ENCODE measurements at regions of chr6 and their contacts with region 1.

Region 1: DNA sequence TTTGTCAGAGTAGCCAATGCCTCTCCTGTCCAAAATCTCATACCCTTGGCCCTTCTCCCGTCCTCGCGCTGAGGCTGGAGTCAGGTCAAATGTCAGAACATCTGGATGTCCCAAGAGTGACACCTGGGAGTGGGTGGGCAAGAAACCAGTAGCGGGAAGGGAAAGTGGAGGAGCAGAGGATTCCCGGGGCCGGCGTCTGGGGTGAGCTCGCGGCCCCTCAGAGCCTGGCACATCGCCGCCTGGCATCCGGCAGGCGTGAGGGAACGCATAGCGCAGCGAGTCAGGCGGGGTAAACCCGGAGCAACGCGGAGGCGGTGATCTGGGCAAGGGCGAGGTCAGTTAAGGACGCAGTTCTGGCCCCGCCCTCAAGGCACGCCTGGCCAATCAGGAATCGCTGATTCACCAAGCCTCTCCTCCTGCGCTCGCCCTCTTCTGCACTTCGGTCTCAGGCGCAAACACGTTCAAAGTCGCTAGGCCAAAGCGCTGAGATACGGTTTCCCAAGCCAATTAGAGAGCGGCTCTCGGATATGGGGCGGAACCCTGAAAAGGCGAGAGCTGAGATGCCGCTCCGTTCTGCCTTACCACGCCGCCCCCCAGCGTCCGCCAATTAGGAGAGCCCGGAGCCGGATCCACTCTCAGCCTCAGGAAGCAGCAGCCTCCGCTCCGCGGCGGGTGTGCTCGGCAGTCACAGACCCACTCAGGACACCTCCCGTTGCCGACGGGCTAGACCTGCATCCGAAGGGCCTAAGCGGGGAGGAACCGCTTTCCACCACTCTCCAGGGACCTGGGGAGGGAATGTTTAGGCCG is 22.5 kb downstream of the VPS52 start:
- DNase-seq: peak; percentile 96 to 98
- H3K4me3 ChIP-seq: peak overlapping the region; percentile 49
- H3K4me3 Mint-ChIP-seq: peak overlapping the region; percentile 85
- H3K27ac Mint-ChIP-seq: peak overlapping the region; percentile 75
- H3K4me1 ChIP-seq: peaks cover 5% of the 10 kb centered on the region; the same call in 1 of the 2 replicates
- H3K4me1 Mint-ChIP-seq: peaks cover 10% of the 10 kb centered on the region
- H3K27me3 ChIP-seq: no peaks in the 10 kb centered on the region
- H3K27me3 Mint-ChIP-seq: no peaks in the 10 kb centered on the region
- CTCF ChIP-seq: peak in 1 of 2 experiments; percentile 3

Region 2: DNA sequence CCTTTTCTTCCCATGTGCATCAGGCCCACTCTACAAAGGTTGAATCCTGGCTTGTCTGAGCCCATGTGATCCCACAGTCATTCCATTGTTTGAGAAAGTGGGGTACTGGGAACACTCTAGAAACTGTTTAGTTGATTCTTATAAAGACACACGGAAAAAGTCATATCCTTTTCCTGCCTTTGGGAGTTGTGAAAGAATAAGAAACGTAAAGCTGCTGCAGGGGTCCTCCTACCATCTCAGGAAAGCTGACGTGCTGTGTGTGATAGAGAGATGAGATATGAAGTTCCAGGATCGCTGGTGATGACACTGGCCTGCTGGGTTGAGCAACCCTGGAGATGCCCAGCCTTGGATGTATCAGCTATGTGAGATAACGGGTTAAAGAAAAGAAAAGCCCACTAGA is 697.7 kb before region 1 on chr6:
- CTCF ChIA-PET with region 1: no interaction called
- POLR2A ChIA-PET with region 1: no interaction called
- intact Hi-C with region 1: no loop called
- DNase-seq: no peak
- H3K4me3 ChIP-seq: no peak overlapping the region
- H3K4me3 Mint-ChIP-seq: no peak overlapping the region
- H3K27ac Mint-ChIP-seq: no peak overlapping the region
- H3K4me1 ChIP-seq: no peaks in the 10 kb centered on the region
- H3K4me1 Mint-ChIP-seq: no peaks in the 10 kb centered on the region
- H3K27me3 ChIP-seq: no peaks in the 10 kb centered on the region
- H3K27me3 Mint-ChIP-seq: peaks cover 16% of the 10 kb centered on the region
- CTCF ChIP-seq: no peak

Region 3: GRCh38 chr6:32894080-32895005 is 354.8 kb before region 1 on chr6:
- CTCF ChIA-PET with region 1: interaction called, 3 read pairs
- POLR2A ChIA-PET with region 1: no interaction called
- intact Hi-C with region 1: loop called (anchors 1 kb)
- DNase-seq: peak; percentile 93 to 96
- H3K4me3 ChIP-seq: peak overlapping the region; percentile 68
- H3K4me3 Mint-ChIP-seq: peak overlapping the region; percentile 99
- H3K27ac Mint-ChIP-seq: peak overlapping the region; percentile 96
- H3K4me1 ChIP-seq: no peaks in the 10 kb centered on the region
- H3K4me1 Mint-ChIP-seq: peaks cover 7% of the 10 kb centered on the region
- H3K27me3 ChIP-seq: no peaks in the 10 kb centered on the region
- H3K27me3 Mint-ChIP-seq: peaks cover 4% of the 10 kb centered on the region
- CTCF ChIP-seq: no peak

Region 4: GRCh38 chr6:33029328-33030184 is 219.6 kb before region 1 on chr6:
- CTCF ChIA-PET with region 1: no interaction called
- POLR2A ChIA-PET with region 1: no interaction called
- intact Hi-C with region 1: no loop called
- DNase-seq: no peak
- H3K4me3 ChIP-seq: no peak overlapping the region
- H3K4me3 Mint-ChIP-seq: no peak overlapping the region
- H3K27ac Mint-ChIP-seq: no peak overlapping the region
- H3K4me1 ChIP-seq: no peaks in the 10 kb centered on the region
- H3K4me1 Mint-ChIP-seq: no peaks in the 10 kb centered on the region
- H3K27me3 ChIP-seq: no peaks in the 10 kb centered on the region
- H3K27me3 Mint-ChIP-seq: peaks cover 23% of the 10 kb centered on the region
- CTCF ChIP-seq: no peak

Region 5: GRCh38 chr6:33123732-33124524 is 125.2 kb before region 1 on chr6:
- CTCF ChIA-PET with region 1: interaction called, 3 read pairs
- POLR2A ChIA-PET with region 1: no interaction called
- intact Hi-C with region 1: loop called (anchors 2 kb)
- DNase-seq: peak in 1 of 2 experiments; percentile 18
- H3K4me3 ChIP-seq: no peak overlapping the region
- H3K4me3 Mint-ChIP-seq: no peak overlapping the region
- H3K27ac Mint-ChIP-seq: no peak overlapping the region
- H3K4me1 ChIP-seq: peaks cover 6% of the 10 kb centered on the region; the same call in 1 of the 2 replicates
- H3K4me1 Mint-ChIP-seq: peaks cover 12% of the 10 kb centered on the region
- H3K27me3 ChIP-seq: no peaks in the 10 kb centered on the region
- H3K27me3 Mint-ChIP-seq: peaks cover 4% of the 10 kb centered on the region
- CTCF ChIP-seq: peak in 1 of 2 experiments; percentile 30

Region 6: GRCh38 chr6:33200219-33201146 is 48.6 kb before region 1 on chr6 and contains the starts of genes RXRB and SLC39A7:
- CTCF ChIA-PET with region 1: interaction called, 11 read pairs
- POLR2A ChIA-PET with region 1: no interaction called
- intact Hi-C with region 1: loop called (anchors 1 kb)
- DNase-seq: peak; percentile 97 to 99
- H3K4me3 ChIP-seq: peak within 1 kb of the TSS; percentile 67
- H3K4me3 Mint-ChIP-seq: peak within 1 kb of the TSS; percentile 100
- H3K27ac Mint-ChIP-seq: peak within 1 kb of the TSS; percentile 99
- H3K4me1 ChIP-seq: peaks cover 29% of the 10 kb centered on the region
- H3K4me1 Mint-ChIP-seq: peaks cover 43% of the 10 kb centered on the region
- H3K27me3 ChIP-seq: no peaks in the 10 kb centered on the region
- H3K27me3 Mint-ChIP-seq: no peaks in the 10 kb centered on the region
- CTCF ChIP-seq: no peak
- total RNA-seq, gene RXRB: 29.5 and 30.4 TPM in 2 replicates
- total RNA-seq, gene SLC39A7: 140 and 141 TPM in 2 replicates

Region 7: GRCh38 chr6:33271458-33272274 is 22.5 kb after region 1 on chr6 and contains the starts of genes RPS18 and VPS52:
- CTCF ChIA-PET with region 1: interaction called, 4 read pairs
- POLR2A ChIA-PET with region 1: interaction called, 11 read pairs
- intact Hi-C with region 1: loop called (anchors 1 kb)
- DNase-seq: peak; percentile 93 to 97
- H3K4me3 ChIP-seq: peak within 1 kb of the TSS; percentile 56
- H3K4me3 Mint-ChIP-seq: peak within 1 kb of the TSS; percentile 95
- H3K27ac Mint-ChIP-seq: peak within 1 kb of the TSS; percentile 100
- H3K4me1 ChIP-seq: peaks cover 18% of the 10 kb centered on the region
- H3K4me1 Mint-ChIP-seq: peaks cover 24% of the 10 kb centered on the region
- H3K27me3 ChIP-seq: no peaks in the 10 kb centered on the region
- H3K27me3 Mint-ChIP-seq: no peaks in the 10 kb centered on the region
- CTCF ChIP-seq: no peak
- total RNA-seq, gene RPS18: 2,340 and 2,366 TPM in 2 replicates
- total RNA-seq, gene VPS52: 55.1 and 55.6 TPM in 2 replicates

Measured in Caco-2 (cell line).